ENCODE measurements at regions of chr9 and their contacts with region 1.

Region 1: GRCh38 chr9:84322828-84323227 is 17.7 kb downstream of the SLC28A3 start:
- DNase-seq: no peak
- ATAC-seq: no peak
- H3K4me3 ChIP-seq: no peak overlapping the region
- H3K27ac ChIP-seq: no peak overlapping the region
- H3K4me1 ChIP-seq: peaks cover 0 to 15% (median 0%) of the 10 kb centered on the region in 12 donors
- H3K27me3 ChIP-seq: no peaks in the 10 kb centered on the region
- CTCF ChIP-seq: no peak
- POLR2A ChIP-seq: no peak

Region 2: GRCh38 chr9:84244850-84245249 is 78.0 kb before region 1 on chr9:
- intact Hi-C with region 1: loop called in 1 of 10 experiments (anchors 10 kb)
- DNase-seq: no peak
- ATAC-seq: no peak
- H3K4me3 ChIP-seq: no peak overlapping the region
- H3K27ac ChIP-seq: no peak overlapping the region
- H3K4me1 ChIP-seq: no peaks in the 10 kb centered on the region
- H3K27me3 ChIP-seq: no peaks in the 10 kb centered on the region
- CTCF ChIP-seq: no peak
- POLR2A ChIP-seq: no peak